Stomach (tissue), 19 donors: ENCODE measurements at regions of chr16 and their contacts with region 1.

Region 1: GRCh38 chr16:11526655-11527350 is 59.9 kb downstream of the LITAF start:
- DNase-seq: peak in 1 of 2 donors; percentile 29
- H3K4me3 ChIP-seq: no peak overlapping the region
- H3K27ac ChIP-seq: no peak overlapping the region
- H3K4me1 ChIP-seq: peaks cover 0 to 5% (median 0%) of the 10 kb centered on the region in 4 donors
- H3K27me3 ChIP-seq: peaks cover 0 to 12% (median 8%) of the 10 kb centered on the region in 3 donors
- CTCF ChIP-seq: no peak
- EP300 ChIP-seq: no peak
- POLR2A ChIP-seq: no peak

Region 2: GRCh38 chr16:11459722-11460121 is 67.1 kb before region 1 on chr16:
- intact Hi-C with region 1: loop called (anchors 10 kb)
- DNase-seq: no peak
- H3K4me3 ChIP-seq: no peak overlapping the region
- H3K27ac ChIP-seq: no peak overlapping the region
- H3K4me1 ChIP-seq: no peaks in the 10 kb centered on the region
- H3K27me3 ChIP-seq: no peaks in the 10 kb centered on the region
- CTCF ChIP-seq: no peak
- EP300 ChIP-seq: no peak
- POLR2A ChIP-seq: no peak

Region 3: GRCh38 chr16:11819798-11820197 is 293.0 kb after region 1 on chr16:
- intact Hi-C with region 1: loop called (anchors 10 kb)
- DNase-seq: peak in 1 of 2 donors; percentile 27
- H3K4me3 ChIP-seq: no peak overlapping the region
- H3K27ac ChIP-seq: no peak overlapping the region
- H3K4me1 ChIP-seq: peaks cover 0 to 14% (median 7%) of the 10 kb centered on the region in 4 donors
- H3K27me3 ChIP-seq: no peaks in the 10 kb centered on the region
- CTCF ChIP-seq: no peak
- EP300 ChIP-seq: no peak
- POLR2A ChIP-seq: no peak